ENCODE measurements at regions of chr2 and their contacts with region 1.

Region 1: DNA sequence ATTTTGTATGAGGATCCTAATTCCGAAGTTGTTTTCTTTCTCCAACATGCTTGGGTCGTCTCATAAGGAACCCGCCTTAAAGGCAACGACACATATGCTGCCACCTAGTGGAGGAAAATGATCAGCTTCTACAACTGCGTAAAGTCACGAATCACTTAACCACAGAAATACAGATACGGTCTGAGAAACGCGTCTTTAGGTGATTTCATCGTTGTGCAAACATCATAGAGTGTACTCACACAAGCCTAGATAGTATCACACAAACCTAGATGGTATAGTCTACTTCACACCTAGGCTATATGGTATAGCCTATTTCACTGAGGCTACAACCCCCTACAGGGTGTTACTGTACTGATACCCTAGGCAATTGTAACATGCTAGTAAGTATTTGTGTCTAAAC is 13.1 kb downstream of the GNLY start:
- DNase-seq: peak; percentile 65 to 68
- H3K4me3 ChIP-seq: no peak overlapping the region
- H3K27ac ChIP-seq: no peak overlapping the region
- H3K4me1 ChIP-seq: peaks cover 0 to 43% (median 19%) of the 10 kb centered on the region in 4 donors
- H3K27me3 ChIP-seq: no peaks in the 10 kb centered on the region
- CTCF ChIP-seq: peak; percentile 81 to 83

Region 2: DNA sequence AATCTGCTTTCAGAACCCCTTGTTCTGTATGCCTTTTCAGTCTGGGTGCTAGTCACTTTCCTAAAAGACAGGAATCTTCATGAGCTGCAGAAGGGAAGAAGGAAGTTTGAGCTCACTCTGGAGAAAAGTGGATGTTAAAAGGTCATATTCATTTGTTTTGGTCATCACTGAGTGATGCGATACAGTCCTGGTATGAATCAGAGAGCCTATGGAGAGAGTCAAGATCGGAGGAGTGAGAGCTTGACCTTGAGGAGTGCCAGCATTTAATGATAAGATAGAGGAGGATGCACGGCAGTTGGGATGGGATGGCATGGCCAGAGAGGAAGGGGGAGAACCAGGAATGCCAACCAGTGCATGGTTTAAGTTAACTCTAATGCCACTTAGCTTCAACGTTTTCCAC is 71.7 kb before region 1 on chr2:
- intact Hi-C with region 1: loop called (anchors 5 kb)
- DNase-seq: no peak
- H3K4me3 ChIP-seq: no peak overlapping the region
- H3K27ac ChIP-seq: no peak overlapping the region
- H3K4me1 ChIP-seq: no peaks in the 10 kb centered on the region
- H3K27me3 ChIP-seq: no peaks in the 10 kb centered on the region
- CTCF ChIP-seq: no peak

Measured in tibial artery (tissue), 4 donors.